Activated CD4-positive, alpha-beta T cell treated with anti-CD3 and anti-CD28 coated beads for 36 hours (primary cell): ENCODE measurements at regions of chr3 and their contacts with region 1.

Region 1: DNA sequence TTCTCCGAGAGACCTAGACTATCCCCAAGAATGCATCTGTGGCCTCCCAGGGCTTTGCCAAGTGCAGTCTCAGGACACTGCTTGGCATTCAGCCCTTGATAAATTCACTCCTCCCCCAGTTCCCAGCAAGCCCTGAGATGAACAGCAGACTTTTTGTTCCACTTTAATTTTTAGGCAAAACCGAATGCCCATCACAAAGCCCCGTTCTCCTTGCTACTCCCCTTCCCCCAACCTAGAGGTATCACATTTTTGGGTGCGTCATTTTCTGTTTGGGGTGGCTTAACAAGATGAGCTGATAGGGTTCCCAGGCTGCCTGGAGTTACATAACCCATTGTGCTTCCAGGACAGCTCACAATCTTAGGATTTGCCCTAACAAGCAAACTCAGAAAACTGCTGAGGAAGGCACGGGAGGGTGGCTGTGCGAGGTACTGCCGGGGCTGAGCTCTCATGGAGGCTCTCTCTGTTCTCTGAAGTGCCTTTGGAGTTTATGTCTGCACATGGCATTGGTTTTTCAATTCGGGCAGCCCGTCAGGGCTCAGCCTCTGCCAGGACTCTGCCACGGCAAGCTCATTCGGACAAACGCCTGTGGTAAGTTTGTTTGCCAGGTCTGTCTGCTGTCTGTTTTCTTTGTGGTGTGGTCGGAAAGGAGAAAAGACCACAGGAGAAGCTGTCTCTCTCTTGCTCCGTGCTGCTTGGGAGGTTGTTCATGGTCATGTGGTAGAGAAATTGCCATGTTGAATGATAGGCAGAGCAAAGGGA is at the start of gene TRAK1:
- DNase-seq: no peak
- ATAC-seq: no peak
- H3K4me3 Mint-ChIP-seq: no peak within 1 kb of the TSS
- H3K27ac Mint-ChIP-seq: no peak within 1 kb of the TSS
- H3K4me1 Mint-ChIP-seq: peaks cover 44% of the 10 kb centered on the region
- H3K27me3 Mint-ChIP-seq: no peaks in the 10 kb centered on the region
- total RNA-seq, gene TRAK1: 22.4 to 23.6 TPM

Region 2: DNA sequence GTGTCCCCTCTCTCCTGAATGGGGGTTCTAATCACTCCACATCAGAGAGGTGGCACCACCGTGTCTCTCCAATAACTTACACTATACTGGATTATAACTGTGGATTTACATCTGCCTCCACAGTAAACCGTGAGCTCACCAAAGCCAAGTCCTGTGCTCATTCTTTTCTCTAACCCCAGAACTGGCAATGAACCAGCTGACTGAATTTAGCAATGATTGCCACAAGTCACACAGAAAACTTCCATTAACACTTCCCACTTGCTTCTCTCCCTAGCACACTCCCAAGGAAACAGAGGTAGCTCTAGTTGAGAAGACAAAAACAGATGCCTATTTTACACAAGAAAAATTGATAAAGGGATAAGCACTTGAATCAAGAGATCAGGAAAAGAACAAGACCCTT is 490.5 kb before region 1 on chr3:
- CTCF ChIA-PET with region 1: no interaction called
- POLR2A ChIA-PET with region 1: no interaction called
- intact Hi-C with region 1: loop called in 1 of 2 experiments (anchors 10 kb)
- DNase-seq: no peak
- ATAC-seq: no peak
- H3K4me3 Mint-ChIP-seq: no peak overlapping the region
- H3K27ac Mint-ChIP-seq: no peak overlapping the region
- H3K4me1 Mint-ChIP-seq: peaks cover 5% of the 10 kb centered on the region
- H3K27me3 Mint-ChIP-seq: no peaks in the 10 kb centered on the region

Region 3: DNA sequence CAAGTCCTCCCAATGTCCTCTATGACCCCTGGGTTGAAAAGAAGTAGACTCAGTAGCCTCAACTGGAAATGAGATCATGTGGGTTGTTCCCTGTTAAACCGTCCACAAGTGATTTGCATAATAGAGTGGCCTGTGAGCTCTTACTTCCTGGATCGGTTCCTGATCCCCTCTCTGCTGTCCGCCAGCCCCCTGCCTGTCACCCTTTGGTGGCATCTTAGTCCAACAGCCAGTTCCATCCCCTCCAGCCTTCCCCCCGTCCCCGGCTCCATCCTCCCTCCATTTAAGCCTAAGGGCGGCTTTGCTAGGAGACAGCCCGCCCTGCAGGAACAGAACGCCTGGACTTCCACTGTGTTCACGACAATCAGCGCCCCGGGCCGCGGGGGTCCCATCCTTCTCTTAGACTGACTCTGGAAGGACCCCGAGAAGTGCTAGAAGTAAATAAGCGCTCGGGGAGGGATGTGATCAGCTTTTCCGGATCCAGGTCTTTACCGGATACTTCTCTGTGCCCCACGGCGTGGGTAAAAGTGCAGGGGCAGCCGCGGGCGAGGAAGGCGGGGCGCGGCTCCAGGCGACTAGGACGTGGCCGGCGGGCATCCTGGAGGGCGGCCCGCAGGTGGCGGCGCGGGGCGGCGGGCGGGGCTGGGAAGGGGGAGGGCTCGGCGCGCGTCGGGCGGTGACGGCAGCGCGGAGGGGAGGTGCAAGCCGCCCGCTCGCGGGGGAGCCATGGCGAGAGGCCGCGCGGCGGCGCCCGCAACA is 78.0 kb before region 1 on chr3:
- CTCF ChIA-PET with region 1: interaction called, 3 read pairs
- POLR2A ChIA-PET with region 1: no interaction called
- intact Hi-C with region 1: loop called (anchors 2 to 5 kb)
- DNase-seq: peak; percentile 88
- ATAC-seq: peak; percentile 75
- H3K4me3 Mint-ChIP-seq: peak overlapping the region; percentile 90
- H3K27ac Mint-ChIP-seq: peak overlapping the region; percentile 92
- H3K4me1 Mint-ChIP-seq: peaks cover 46% of the 10 kb centered on the region
- H3K27me3 Mint-ChIP-seq: no peaks in the 10 kb centered on the region